Activated CD4-positive, alpha-beta T cell treated with anti-CD3 and anti-CD28 coated beads, Interleukin-2, amount 10 ng/mL, durations not matched to agents 24 days and 14 days (primary cell): ENCODE measurements at regions of chr1 and their contacts with region 1.

Region 1: GRCh38 chr1:116737020-116737854 is 17.0 kb upstream of the CD2 start:
- DNase-seq: peak; percentile 93
- H3K4me3 Mint-ChIP-seq: peak overlapping the region; percentile 76
- H3K27ac Mint-ChIP-seq: peak overlapping the region; percentile 100
- H3K4me1 Mint-ChIP-seq: peaks cover 67% of the 10 kb centered on the region
- H3K27me3 Mint-ChIP-seq: no peaks in the 10 kb centered on the region

Region 2: GRCh38 chr1:116288201-116288761 is 449.0 kb before region 1 on chr1:
- intact Hi-C with region 1: no loop called
- DNase-seq: no peak
- H3K4me3 Mint-ChIP-seq: no peak overlapping the region
- H3K27ac Mint-ChIP-seq: no peak overlapping the region
- H3K4me1 Mint-ChIP-seq: no peaks in the 10 kb centered on the region
- H3K27me3 Mint-ChIP-seq: peaks cover 17% of the 10 kb centered on the region

Region 3: GRCh38 chr1:116556289-116557006 is 180.8 kb before region 1 on chr1:
- intact Hi-C with region 1: loop called (anchors 5 kb)
- DNase-seq: peak; percentile 88
- H3K4me3 Mint-ChIP-seq: peak overlapping the region; percentile 19
- H3K27ac Mint-ChIP-seq: peak overlapping the region; percentile 86
- H3K4me1 Mint-ChIP-seq: peaks cover 69% of the 10 kb centered on the region
- H3K27me3 Mint-ChIP-seq: no peaks in the 10 kb centered on the region

Region 4: GRCh38 chr1:116769561-116769977 is 32.3 kb after region 1 on chr1:
- intact Hi-C with region 1: loop called (anchors 1 kb)
- DNase-seq: peak; percentile 93
- H3K4me3 Mint-ChIP-seq: peak overlapping the region; percentile 98
- H3K27ac Mint-ChIP-seq: peak overlapping the region; percentile 99
- H3K4me1 Mint-ChIP-seq: peaks cover 83% of the 10 kb centered on the region
- H3K27me3 Mint-ChIP-seq: no peaks in the 10 kb centered on the region

Region 5: GRCh38 chr1:116826818-116827606 is 89.8 kb after region 1 on chr1:
- intact Hi-C with region 1: loop called (anchors 1 kb)
- DNase-seq: peak; percentile 91
- H3K4me3 Mint-ChIP-seq: peak overlapping the region; percentile 76
- H3K27ac Mint-ChIP-seq: peak overlapping the region; percentile 93
- H3K4me1 Mint-ChIP-seq: peaks cover 59% of the 10 kb centered on the region
- H3K27me3 Mint-ChIP-seq: no peaks in the 10 kb centered on the region

Region 6: GRCh38 chr1:116934586-116935207 is 197.5 kb after region 1 on chr1:
- intact Hi-C with region 1: loop called (anchors 2 kb)
- DNase-seq: no peak
- H3K4me3 Mint-ChIP-seq: peak overlapping the region; percentile 36
- H3K27ac Mint-ChIP-seq: peak overlapping the region; percentile 74
- H3K4me1 Mint-ChIP-seq: peaks cover 28% of the 10 kb centered on the region
- H3K27me3 Mint-ChIP-seq: no peaks in the 10 kb centered on the region

Region 7: DNA sequence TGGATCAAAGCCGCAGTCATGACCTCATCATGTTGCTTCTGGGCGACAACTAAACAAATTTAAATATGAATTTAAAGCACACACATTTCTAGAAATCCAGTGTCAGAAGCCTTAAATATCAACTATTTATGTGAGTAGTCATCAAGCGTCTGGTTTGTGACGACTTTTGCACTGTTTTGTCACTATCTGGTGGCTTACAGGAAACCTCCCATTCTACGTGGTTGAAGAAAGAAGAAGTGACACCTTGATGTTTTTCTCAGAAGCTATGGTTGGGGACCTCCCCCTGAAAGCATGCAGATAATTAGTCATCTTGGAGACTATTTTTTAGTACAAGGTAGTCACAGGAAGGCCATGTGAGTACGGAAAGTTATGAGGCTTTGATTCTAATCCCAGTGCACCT is 927.1 kb after region 1 on chr1:
- intact Hi-C with region 1: loop called (anchors 10 kb)
- DNase-seq: peak; percentile 92
- H3K4me3 Mint-ChIP-seq: peak overlapping the region; percentile 17
- H3K27ac Mint-ChIP-seq: peak overlapping the region; percentile 89
- H3K4me1 Mint-ChIP-seq: peaks cover 79% of the 10 kb centered on the region
- H3K27me3 Mint-ChIP-seq: peaks cover 9% of the 10 kb centered on the region